ENCODE measurements at regions of chr7 and their contacts with region 1.

Region 1: DNA sequence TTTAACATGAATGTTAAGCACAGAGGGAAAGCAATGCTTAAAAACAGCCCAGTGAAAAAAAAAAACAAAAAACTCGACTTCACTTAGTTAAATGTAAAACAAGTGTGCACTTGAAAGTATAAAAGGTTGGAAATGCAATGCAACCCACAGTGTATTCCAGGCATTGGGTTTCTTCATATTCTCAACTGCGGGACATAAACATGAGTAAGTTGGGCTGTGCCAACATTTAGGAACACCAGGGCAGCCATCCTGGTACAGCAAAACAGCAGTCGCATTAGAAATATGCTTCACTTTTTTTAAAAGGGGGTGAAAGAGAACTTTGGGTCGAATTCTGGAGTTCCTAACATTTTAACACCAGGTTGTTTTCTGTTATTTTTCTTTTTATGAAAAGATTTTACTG is 937 bp downstream of the STEAP1 start:
- DNase-seq: no peak
- CTCF ChIP-seq: no peak

Region 2: GRCh38 chr7:90165724-90166123 is 10.5 kb after region 1 on chr7:
- CTCF ChIA-PET with region 1: interaction called, 13 read pairs
- POLR2A ChIA-PET with region 1: no interaction called
- DNase-seq: no peak
- CTCF ChIP-seq: no peak

Region 3: GRCh38 chr7:90173127-90173844 is 18.1 kb after region 1 on chr7:
- CTCF ChIA-PET with region 1: interaction called, 10 read pairs
- POLR2A ChIA-PET with region 1: no interaction called
- DNase-seq: peak; percentile 40
- CTCF ChIP-seq: no peak

Region 4: GRCh38 chr7:90262438-90262837 is 107.2 kb after region 1 on chr7:
- CTCF ChIA-PET with region 1: interaction called, 16 read pairs
- POLR2A ChIA-PET with region 1: no interaction called
- DNase-seq: peak; percentile 44
- CTCF ChIP-seq: peak; percentile 42

Region 5: DNA sequence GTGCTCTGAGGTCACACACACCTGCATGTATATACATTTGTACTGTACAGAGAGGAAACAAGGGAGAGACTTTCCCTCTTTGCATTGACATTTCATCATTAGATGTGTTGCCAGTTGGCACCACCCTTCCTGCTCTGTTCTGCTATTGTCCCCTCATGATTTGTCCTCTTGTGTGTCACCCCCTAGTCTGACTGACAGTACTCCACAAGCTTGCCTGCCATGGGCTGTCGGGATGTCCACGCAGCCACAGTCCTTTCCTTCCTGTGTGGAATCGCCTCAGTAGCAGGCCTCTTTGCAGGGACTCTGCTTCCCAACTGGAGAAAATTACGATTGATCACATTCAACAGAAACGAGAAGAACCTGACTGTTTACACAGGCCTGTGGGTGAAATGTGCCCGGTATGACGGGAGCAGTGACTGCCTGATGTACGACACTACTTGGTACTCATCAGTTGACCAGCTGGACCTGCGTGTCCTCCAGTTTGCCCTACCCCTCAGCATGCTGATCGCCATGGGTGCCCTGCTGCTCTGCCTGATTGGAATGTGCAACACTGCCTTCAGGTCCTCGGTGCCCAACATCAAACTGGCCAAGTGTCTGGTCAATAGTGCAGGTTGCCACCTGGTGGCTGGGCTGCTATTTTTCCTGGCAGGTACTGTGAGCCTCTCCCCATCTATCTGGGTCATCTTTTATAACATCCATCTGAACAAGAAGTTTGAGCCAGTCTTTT is 257.4 kb after region 1 on chr7:
- CTCF ChIA-PET with region 1: interaction called, 10 read pairs
- POLR2A ChIA-PET with region 1: no interaction called
- DNase-seq: no peak
- CTCF ChIP-seq: peak; percentile 31

Region 6: DNA sequence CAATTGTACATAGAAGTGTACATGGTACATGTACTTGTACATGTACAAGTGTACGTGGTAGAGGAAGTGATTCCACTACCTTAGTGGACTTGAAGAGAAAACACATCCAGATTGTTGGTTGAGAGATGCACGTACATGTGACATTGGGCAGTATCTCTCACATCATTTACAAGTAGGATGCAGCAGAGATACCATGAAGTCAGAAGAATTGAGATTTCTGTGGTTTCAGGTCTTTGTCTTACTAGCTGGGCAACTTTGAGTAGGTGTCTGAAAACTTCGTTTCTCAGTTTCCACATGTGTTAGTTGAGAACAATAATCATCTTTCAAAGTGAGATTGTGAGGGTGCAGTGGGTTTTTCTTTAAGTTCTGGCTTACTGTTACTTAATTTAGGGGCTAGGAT is 269.5 kb after region 1 on chr7:
- CTCF ChIA-PET with region 1: interaction called, 78 read pairs
- POLR2A ChIA-PET with region 1: no interaction called
- DNase-seq: peak; percentile 36
- CTCF ChIP-seq: no peak

Measured in GM10248 (cell line).